A549 (cell line): ENCODE measurements at regions of chr5 and their contacts with region 1.

Region 1: GRCh38 chr5:69093771-69094482 is at the start of gene SLC30A5:
- DNase-seq: peak; percentile 98 to 100
- ATAC-seq: peak; percentile 99
- H3K4me3 ChIP-seq: peak within 1 kb of the TSS; percentile 89
- H3K27ac ChIP-seq: peak within 1 kb of the TSS; percentile 94 to 98
- H3K4me1 ChIP-seq: peaks cover 20% of the 10 kb centered on the region
- CTCF ChIP-seq: peak; percentile 85
- EP300 ChIP-seq: no peak
- POLR2A ChIP-seq: peak; percentile 96
- RAD21 ChIP-seq: peak; percentile 93
- polyA plus RNA-seq, gene SLC30A5: 74.6 and 79.8 TPM in 2 replicates

Region 2: GRCh38 chr5:68998652-68999051 is 95.3 kb before region 1 on chr5:
- CTCF ChIA-PET with region 1: no interaction called
- POLR2A ChIA-PET with region 1: no interaction called
- DNase-seq: no peak
- ATAC-seq: no peak
- H3K4me3 ChIP-seq: no peak overlapping the region
- H3K27ac ChIP-seq: no peak overlapping the region
- H3K4me1 ChIP-seq: no peaks in the 10 kb centered on the region
- CTCF ChIP-seq: no peak
- EP300 ChIP-seq: no peak
- POLR2A ChIP-seq: no peak
- RAD21 ChIP-seq: no peak

Region 3: GRCh38 chr5:69083412-69083811 is 10.5 kb before region 1 on chr5:
- CTCF ChIA-PET with region 1: interaction called, 30 read pairs
- POLR2A ChIA-PET with region 1: interaction called, 3 read pairs
- DNase-seq: peak in 1 of 2 experiments; percentile 66
- ATAC-seq: peak; percentile 70 to 96; a peak in 5 of 6 replicates
- H3K4me3 ChIP-seq: no peak overlapping the region
- H3K27ac ChIP-seq: no peak overlapping the region
- H3K4me1 ChIP-seq: 0 out of 3 replicates have a peak, but pooled peaks cover 4% of the 10 kb centered on the region
- CTCF ChIP-seq: no peak; the same call in 2 of the 3 replicates
- EP300 ChIP-seq: no peak
- POLR2A ChIP-seq: no peak
- RAD21 ChIP-seq: peak in 1 of 2 experiments; percentile 44; a peak in 2 of 5 replicates

Region 4: GRCh38 chr5:69113851-69114250 is 19.9 kb after region 1 on chr5:
- CTCF ChIA-PET with region 1: interaction called, 10 read pairs
- POLR2A ChIA-PET with region 1: interaction called, 8 read pairs
- DNase-seq: no peak
- ATAC-seq: no peak
- H3K4me3 ChIP-seq: no peak overlapping the region
- H3K27ac ChIP-seq: no peak overlapping the region
- H3K4me1 ChIP-seq: peaks cover 7% of the 10 kb centered on the region; the same call in 1 of the 3 replicates
- CTCF ChIP-seq: no peak
- EP300 ChIP-seq: no peak
- POLR2A ChIP-seq: no peak
- RAD21 ChIP-seq: no peak

Region 5: GRCh38 chr5:69189162-69190086 is 95.5 kb after region 1 on chr5 and contains the start of gene CENPH:
- CTCF ChIA-PET with region 1: interaction called, 16 read pairs
- POLR2A ChIA-PET with region 1: interaction called, 8 read pairs
- DNase-seq: peak; percentile 89 to 94
- ATAC-seq: peak; percentile 94 to 97
- H3K4me3 ChIP-seq: peak within 1 kb of the TSS; percentile 74
- H3K27ac ChIP-seq: peak within 1 kb of the TSS; percentile 84 to 95
- H3K4me1 ChIP-seq: peaks cover 11% of the 10 kb centered on the region; the same call in 2 of the 3 replicates
- CTCF ChIP-seq: no peak
- EP300 ChIP-seq: no peak
- POLR2A ChIP-seq: peak; percentile 60
- RAD21 ChIP-seq: no peak
- polyA plus RNA-seq, gene CENPH: 19.0 and 35.2 TPM in 2 replicates